Vagina (tissue), 2 donors: ENCODE measurements at regions of chr3 and their contacts with region 1.

Region 1: GRCh38 chr3:56759532-56759931 is 42.2 kb downstream of the ARHGEF3 start:
- DNase-seq: no peak
- H3K4me3 ChIP-seq: no peak overlapping the region
- H3K27ac ChIP-seq: no peak overlapping the region
- H3K4me1 ChIP-seq: peaks cover 35% of the 10 kb centered on the region
- H3K27me3 ChIP-seq: no peaks in the 10 kb centered on the region
- CTCF ChIP-seq: no peak
- POLR2A ChIP-seq: no peak

Region 2: DNA sequence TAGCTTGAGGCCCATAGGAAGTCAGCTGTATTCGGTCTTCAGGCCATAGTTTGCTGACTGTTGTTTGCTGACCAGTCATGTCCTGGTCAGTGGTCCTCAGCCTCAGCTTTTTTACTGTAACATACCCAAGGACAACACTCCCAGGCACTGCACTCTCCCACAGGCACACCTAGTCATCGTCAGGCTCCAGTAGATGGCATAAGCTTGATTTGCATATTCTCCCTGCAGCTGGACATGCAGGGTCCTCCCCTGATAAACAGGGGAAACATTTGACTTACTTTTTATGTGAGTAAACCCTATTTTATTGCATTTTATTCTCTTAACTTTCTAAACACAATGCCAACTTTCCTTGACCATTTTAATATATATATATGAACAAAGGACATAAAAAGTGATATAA is 19.4 kb after region 1 on chr3:
- intact Hi-C with region 1: loop called (anchors 1 kb)
- DNase-seq: no peak
- H3K4me3 ChIP-seq: no peak overlapping the region
- H3K27ac ChIP-seq: no peak overlapping the region
- H3K4me1 ChIP-seq: peaks cover 41% of the 10 kb centered on the region
- H3K27me3 ChIP-seq: no peaks in the 10 kb centered on the region
- CTCF ChIP-seq: no peak
- POLR2A ChIP-seq: no peak